ENCODE measurements at regions of chr1 and their contacts with region 1.

Region 1: GRCh38 chr1:23691499-23692307 is at the start of gene RPL11:
- DNase-seq: peak; percentile 96
- H3K4me3 Mint-ChIP-seq: peak within 1 kb of the TSS; percentile 97
- H3K27ac Mint-ChIP-seq: peak within 1 kb of the TSS; percentile 97
- H3K4me1 Mint-ChIP-seq: peaks cover 41% of the 10 kb centered on the region
- H3K27me3 Mint-ChIP-seq: no peaks in the 10 kb centered on the region
- total RNA-seq, gene RPL11: 1,147 and 1,194 TPM in 2 replicates

Region 2: DNA sequence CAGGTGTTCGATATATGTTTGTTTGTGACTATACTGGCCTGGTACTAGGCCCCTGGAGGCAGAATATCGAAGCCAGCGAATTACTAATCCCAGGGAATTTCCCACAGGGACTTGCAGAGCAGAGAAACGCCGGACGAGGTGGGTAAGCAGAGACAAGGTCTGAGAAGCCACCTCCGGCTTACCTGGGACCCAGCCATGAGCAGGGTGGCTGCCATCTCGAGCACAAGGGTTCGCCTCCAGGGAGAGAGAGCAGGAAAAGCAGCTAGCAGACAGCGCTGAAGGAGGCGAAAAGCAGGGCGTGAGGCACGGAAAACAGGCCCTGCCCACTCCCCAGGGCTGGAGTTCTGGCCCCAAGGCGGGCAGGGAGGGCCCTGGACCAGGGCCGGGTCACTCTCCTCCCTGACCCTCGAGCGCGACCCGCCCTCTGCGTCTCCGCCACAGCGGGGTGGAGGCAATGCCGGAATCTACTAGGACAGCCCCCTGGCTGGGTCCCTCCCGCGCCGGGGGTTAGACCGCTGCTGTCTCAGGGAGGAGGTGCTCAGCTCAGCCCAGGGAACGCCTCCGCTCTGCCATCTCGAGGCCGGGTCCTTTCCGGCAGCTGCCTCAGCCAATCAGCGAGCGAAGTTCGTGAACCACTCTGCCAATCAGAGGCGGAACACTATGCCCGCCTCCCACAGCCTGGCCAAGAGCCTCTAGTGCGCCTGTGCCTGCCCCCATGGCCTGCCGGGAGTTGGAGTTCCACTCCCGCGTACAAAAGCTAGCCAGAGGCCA is 323.7 kb before region 1 on chr1:
- intact Hi-C with region 1: loop called (anchors 10 kb)
- DNase-seq: peak; percentile 99
- H3K4me3 Mint-ChIP-seq: peak overlapping the region; percentile 94
- H3K27ac Mint-ChIP-seq: peak overlapping the region; percentile 99
- H3K4me1 Mint-ChIP-seq: peaks cover 33% of the 10 kb centered on the region
- H3K27me3 Mint-ChIP-seq: no peaks in the 10 kb centered on the region

Region 3: DNA sequence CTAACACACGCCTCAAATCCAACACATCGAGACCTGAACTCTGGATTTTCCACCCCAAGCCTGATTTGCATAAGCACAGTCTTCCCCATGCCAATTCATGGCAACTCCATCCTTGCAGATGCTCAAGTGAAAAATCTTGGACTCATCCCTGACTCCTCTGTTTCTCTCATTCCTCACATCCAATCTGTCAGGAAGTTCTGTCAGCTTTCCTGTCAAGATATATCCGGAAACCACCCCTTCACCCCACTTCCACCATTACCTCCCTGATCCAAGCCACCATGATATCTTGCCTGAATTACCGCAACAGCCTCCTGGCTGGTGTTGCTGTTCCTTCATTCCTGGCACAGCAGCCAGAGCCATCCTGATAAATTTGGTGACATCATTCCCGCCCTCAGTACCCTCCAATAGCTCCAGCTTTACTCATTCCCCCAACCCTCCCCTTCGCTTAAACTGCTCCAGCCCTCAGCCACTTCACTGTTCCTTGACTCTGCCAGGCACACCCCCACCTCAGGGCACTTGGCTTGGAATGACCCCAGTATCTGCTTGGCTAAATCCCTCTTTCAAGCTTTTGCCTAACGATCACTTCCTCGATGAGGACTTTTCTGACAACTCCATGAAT is 284.6 kb before region 1 on chr1:
- intact Hi-C with region 1: no loop called
- DNase-seq: no peak
- H3K4me3 Mint-ChIP-seq: no peak overlapping the region
- H3K27ac Mint-ChIP-seq: no peak overlapping the region
- H3K4me1 Mint-ChIP-seq: peaks cover 7% of the 10 kb centered on the region
- H3K27me3 Mint-ChIP-seq: no peaks in the 10 kb centered on the region

Region 4: DNA sequence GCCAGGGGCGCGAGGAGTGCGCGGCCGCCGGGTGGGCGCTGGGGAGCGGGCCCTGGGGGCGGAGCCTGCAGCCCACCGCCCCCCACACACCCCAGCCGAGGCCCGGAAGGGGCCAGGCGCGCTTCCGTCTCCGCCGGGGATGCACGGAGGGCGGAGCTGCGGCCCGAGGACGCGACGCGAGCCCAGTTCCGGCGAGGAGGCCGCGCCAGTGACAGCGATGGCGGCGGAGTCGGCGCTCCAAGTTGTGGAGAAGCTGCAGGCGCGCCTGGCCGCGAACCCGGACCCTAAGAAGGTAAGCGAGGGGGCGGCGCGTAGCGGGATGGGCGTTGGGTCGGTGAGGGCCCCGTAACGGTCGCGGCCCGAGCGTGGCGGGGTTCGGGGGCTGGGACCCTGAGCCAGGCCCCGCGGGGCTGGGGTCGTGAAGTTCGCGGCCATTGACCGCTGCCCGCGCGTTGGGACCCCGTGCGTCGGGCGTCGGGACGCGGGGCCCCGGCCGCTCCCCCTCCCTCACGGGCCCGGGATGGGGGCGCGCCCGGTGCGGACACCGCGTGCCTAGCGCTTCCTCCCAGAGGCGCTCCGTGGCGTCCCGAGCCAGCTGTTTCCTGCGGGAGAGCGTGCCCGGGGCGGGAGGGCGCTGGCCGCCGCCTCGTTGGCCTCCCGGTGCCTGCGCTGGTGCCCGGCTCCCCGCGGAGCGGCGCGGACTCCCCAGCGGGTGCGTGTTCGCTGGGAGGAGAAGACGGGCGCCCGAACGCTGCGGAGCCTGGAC is 51.8 kb after region 1 on chr1 and contains the start of gene ELOA:
- intact Hi-C with region 1: loop called (anchors 1 kb)
- DNase-seq: peak; percentile 95
- H3K4me3 Mint-ChIP-seq: peak within 1 kb of the TSS; percentile 91
- H3K27ac Mint-ChIP-seq: peak within 1 kb of the TSS; percentile 90
- H3K4me1 Mint-ChIP-seq: peaks cover 40% of the 10 kb centered on the region
- H3K27me3 Mint-ChIP-seq: no peaks in the 10 kb centered on the region
- total RNA-seq, gene ELOA: 51.9 and 54.3 TPM in 2 replicates

Region 5: GRCh38 chr1:23751050-23751814 is 59.5 kb after region 1 on chr1:
- intact Hi-C with region 1: loop called (anchors 1 kb)
- DNase-seq: peak; percentile 79
- H3K4me3 Mint-ChIP-seq: no peak overlapping the region
- H3K27ac Mint-ChIP-seq: peak overlapping the region; percentile 32
- H3K4me1 Mint-ChIP-seq: peaks cover 25% of the 10 kb centered on the region
- H3K27me3 Mint-ChIP-seq: no peaks in the 10 kb centered on the region